Psoas muscle (tissue), 8 donors: ENCODE measurements at regions of chr1 and their contacts with region 1.

Region 1: DNA sequence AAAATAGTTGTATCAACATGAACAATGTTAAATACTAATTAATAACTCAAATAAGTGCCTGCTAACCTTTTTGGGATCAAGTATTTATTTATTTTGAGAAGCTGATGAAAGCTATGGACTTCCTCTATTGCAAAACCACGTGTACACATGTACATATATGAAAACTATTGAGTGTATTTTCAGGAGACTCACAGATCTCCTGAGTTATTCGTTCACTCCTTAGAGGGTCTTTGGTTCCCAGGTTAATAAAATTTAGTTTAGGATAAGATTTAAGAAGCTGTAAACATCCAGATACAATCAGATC is 130.5 kb downstream of the DISC1 start:
- DNase-seq: no peak
- ATAC-seq: peak in 2 of 4 donors; percentile 47 to 53
- H3K4me3 ChIP-seq: no peak overlapping the region
- H3K27ac ChIP-seq: no peak overlapping the region
- H3K4me1 ChIP-seq: peaks cover 2% of the 10 kb centered on the region
- H3K27me3 ChIP-seq: no peaks in the 10 kb centered on the region
- CTCF ChIP-seq: no peak

Region 2: DNA sequence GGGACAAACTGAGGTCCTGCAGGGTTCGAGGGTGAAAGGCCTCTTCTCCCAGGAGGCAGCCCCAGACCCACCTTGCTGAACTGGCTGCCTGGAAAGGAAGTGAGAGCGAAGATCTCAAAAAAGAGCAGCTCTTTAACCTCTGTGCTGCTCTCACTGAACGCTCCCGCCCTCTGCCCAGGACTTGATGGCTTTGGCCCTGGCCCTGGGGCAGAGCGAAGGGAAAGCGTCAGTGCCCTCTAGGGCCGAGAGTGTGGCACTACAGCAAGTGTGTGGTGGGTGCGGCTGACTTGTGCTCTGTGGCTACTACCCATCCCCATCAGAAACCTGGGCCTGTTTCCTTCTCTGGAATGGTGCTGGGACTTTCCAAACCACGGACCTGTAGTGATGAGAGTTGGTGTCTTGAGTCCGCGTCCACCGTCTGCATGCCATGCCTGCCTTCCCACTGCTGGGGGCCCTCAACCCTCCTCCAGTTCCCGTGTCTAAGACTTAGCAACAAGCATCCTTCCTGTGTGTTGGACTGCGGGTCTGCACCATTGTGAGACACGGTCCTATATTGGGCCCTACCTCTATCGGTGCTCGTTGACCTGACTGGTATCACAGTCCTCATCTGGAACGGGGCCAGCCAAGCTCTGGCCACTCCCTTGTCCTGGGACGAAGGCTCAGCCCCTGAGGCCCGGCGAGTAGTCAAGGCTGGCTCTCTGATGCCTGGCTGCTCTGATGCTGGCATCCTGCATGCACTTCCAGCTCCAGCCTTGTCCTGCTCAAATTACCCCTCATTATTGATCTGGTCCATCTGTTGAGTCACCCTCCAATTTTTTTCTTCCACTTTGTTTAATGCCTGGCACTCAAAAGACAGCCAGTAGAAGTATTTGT is 49.8 kb after region 1 on chr1:
- intact Hi-C with region 1: loop called (anchors 1 kb)
- DNase-seq: peak; percentile 35 to 70
- ATAC-seq: peak; percentile 86 to 94 (median 88)
- H3K4me3 ChIP-seq: no peak overlapping the region
- H3K27ac ChIP-seq: no peak overlapping the region
- H3K4me1 ChIP-seq: no peaks in the 10 kb centered on the region
- H3K27me3 ChIP-seq: no peaks in the 10 kb centered on the region
- CTCF ChIP-seq: peak; percentile 63